Heart right ventricle (tissue), 16 donors: ENCODE measurements at regions of chr7 and their contacts with region 1.

Region 1: DNA sequence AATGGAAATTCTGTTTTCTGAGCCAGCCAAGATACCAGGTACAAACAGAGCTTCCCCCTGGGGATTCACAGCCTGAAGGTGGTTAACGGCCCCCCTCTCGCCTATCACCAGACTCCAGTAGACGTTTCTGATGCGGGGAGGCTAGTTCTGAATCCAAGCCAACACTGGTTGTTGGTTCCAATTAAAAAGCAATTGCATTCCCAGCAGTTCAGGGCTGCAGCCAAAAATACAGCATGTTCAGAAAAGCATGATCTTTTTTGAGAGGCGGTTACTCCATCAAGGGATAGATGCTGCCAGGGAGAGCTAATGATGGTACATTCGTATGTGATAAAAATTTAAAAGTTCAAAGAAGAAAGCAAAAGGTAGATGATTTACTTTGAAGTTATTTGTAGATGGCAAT is 481.0 kb downstream of the GALNT17 start:
- DNase-seq: peak in 1 of 2 donors; percentile 28
- ATAC-seq: peak in 5 of 8 donors; percentile 18 to 76 (median 53)
- H3K4me3 ChIP-seq: no peak overlapping the region
- H3K27ac ChIP-seq: peak overlapping the region in 8 of 10 donors; percentile 20 to 85 (median 79)
- H3K4me1 ChIP-seq: peaks cover 0 to 33% (median 14%) of the 10 kb centered on the region in 9 donors
- H3K27me3 ChIP-seq: no peaks in the 10 kb centered on the region
- CTCF ChIP-seq: no peak

Region 2: DNA sequence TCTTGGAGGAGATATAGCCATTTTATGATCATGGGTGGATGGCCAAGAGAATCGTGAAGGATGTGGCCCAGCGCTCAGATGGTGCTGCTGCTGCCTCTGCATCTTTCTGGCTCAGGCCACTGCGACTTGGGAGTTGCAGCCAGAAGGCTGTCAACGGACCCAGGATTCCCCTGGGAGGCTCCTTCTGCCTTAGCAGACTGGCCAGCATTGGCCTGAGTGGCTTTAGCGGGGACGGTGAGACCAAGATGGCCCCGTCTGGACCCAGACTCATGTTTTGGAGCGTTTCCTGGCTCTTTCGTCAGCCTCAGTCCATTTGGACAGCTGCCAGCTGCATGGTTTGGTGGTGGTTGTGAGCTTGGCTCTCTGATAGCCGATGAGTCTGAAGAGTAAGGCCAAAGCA is 383.8 kb before region 1 on chr7:
- intact Hi-C with region 1: no loop called
- DNase-seq: no peak
- ATAC-seq: no peak
- H3K4me3 ChIP-seq: no peak overlapping the region
- H3K27ac ChIP-seq: peak overlapping the region in 1 of 10 donors; percentile 25
- H3K4me1 ChIP-seq: no peaks in the 10 kb centered on the region
- H3K27me3 ChIP-seq: no peaks in the 10 kb centered on the region
- CTCF ChIP-seq: no peak

Region 3: GRCh38 chr7:71266912-71267311 is 346.0 kb before region 1 on chr7:
- intact Hi-C with region 1: loop called in 1 of 10 experiments (anchors 10 kb)
- DNase-seq: no peak
- ATAC-seq: no peak
- H3K4me3 ChIP-seq: no peak overlapping the region
- H3K27ac ChIP-seq: no peak overlapping the region
- H3K4me1 ChIP-seq: peaks cover 0 to 24% (median 0%) of the 10 kb centered on the region in 9 donors
- H3K27me3 ChIP-seq: no peaks in the 10 kb centered on the region
- CTCF ChIP-seq: no peak

Region 4: GRCh38 chr7:71521506-71521905 is 91.4 kb before region 1 on chr7:
- intact Hi-C with region 1: no loop called
- DNase-seq: no peak
- ATAC-seq: peak in 1 of 8 donors; percentile 63
- H3K4me3 ChIP-seq: no peak overlapping the region
- H3K27ac ChIP-seq: no peak overlapping the region
- H3K4me1 ChIP-seq: no peaks in the 10 kb centered on the region
- H3K27me3 ChIP-seq: no peaks in the 10 kb centered on the region
- CTCF ChIP-seq: no peak

Region 5: DNA sequence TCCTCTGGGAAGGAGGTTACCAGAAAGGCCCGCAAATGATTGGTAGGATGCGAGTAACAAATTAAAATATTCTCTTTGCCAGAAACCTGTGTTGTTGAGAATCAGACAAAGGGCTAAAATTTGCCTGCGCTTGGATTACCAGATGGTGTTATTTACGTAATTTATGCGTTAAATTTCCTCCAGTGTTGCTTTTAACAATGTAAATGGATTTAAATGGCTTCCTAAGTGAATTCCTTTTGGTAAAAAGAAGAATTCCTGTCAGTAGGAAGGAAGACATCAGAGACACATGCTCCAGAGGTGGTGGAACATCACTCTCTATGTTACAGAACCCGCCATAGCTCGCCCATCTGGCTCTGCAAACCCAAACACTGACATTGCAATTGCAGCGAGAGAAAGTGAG is 39.6 kb after region 1 on chr7:
- intact Hi-C with region 1: loop called in 1 of 10 experiments (anchors 5 kb)
- DNase-seq: no peak
- ATAC-seq: no peak
- H3K4me3 ChIP-seq: no peak overlapping the region
- H3K27ac ChIP-seq: no peak overlapping the region
- H3K4me1 ChIP-seq: peaks cover 0 to 19% (median 0%) of the 10 kb centered on the region in 9 donors
- H3K27me3 ChIP-seq: no peaks in the 10 kb centered on the region
- CTCF ChIP-seq: no peak

Region 6: DNA sequence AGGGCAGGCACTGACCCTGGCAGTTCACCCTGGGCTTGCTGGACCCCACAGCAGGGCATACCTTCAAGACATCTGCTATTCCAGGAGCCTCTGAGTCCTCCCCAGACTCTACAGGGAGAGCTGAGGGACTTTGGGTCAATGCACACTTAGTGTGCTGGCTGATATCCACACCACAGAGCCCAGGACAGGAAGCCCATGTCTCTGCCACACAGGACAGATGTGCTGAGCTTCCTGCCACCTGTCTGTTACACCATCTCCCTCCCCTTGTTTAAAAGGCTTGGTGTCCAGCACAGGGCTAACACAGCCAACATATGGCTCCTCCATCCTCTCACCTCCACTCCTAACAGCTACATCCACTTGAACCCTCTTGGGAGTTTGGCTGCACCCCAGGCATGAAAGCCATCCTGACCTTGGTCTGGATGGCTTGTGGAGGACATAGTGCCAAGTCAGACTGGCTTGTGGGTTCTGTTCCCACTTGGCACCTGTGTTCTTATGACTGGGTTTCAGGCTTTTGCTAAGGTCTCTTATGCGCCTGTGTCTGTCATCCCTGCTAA is 48.8 kb after region 1 on chr7:
- intact Hi-C with region 1: loop called in 1 of 10 experiments (anchors 2 kb)
- DNase-seq: peak; percentile 56 to 60
- ATAC-seq: peak; percentile 68 to 92 (median 88)
- H3K4me3 ChIP-seq: no peak overlapping the region
- H3K27ac ChIP-seq: peak overlapping the region in 5 of 10 donors; percentile 12 to 59 (median 28)
- H3K4me1 ChIP-seq: peaks cover 0 to 21% (median 4%) of the 10 kb centered on the region in 9 donors
- H3K27me3 ChIP-seq: no peaks in the 10 kb centered on the region
- CTCF ChIP-seq: no peak

Region 7: GRCh38 chr7:71860572-71860971 is 247.7 kb after region 1 on chr7:
- intact Hi-C with region 1: no loop called
- DNase-seq: no peak
- ATAC-seq: no peak
- H3K4me3 ChIP-seq: no peak overlapping the region
- H3K27ac ChIP-seq: no peak overlapping the region
- H3K4me1 ChIP-seq: no peaks in the 10 kb centered on the region
- H3K27me3 ChIP-seq: peaks cover 0 to 9% (median 0%) of the 10 kb centered on the region in 7 donors
- CTCF ChIP-seq: no peak